CD8-positive, alpha-beta memory T cell (primary cell): ENCODE measurements at regions of chr5 and their contacts with region 1.

Region 1: GRCh38 chr5:142922223-142922952 is 152.2 kb downstream of the ARHGAP26 start:
- DNase-seq: peak in 1 of 5 donors; percentile 5
- H3K4me3 ChIP-seq: no peak overlapping the region
- H3K4me3 Mint-ChIP-seq: no peak overlapping the region
- H3K27ac ChIP-seq: no peak overlapping the region
- H3K27ac Mint-ChIP-seq: peak overlapping the region; percentile 59 to 93 (median 82)
- H3K4me1 ChIP-seq: peaks cover 13% of the 10 kb centered on the region
- H3K4me1 Mint-ChIP-seq: peaks cover 41 to 54% (median 53%) of the 10 kb centered on the region in 3 donors
- H3K27me3 ChIP-seq: no peaks in the 10 kb centered on the region
- H3K27me3 Mint-ChIP-seq: peaks cover 0 to 1% of the 10 kb centered on the region in 2 donors

Region 2: DNA sequence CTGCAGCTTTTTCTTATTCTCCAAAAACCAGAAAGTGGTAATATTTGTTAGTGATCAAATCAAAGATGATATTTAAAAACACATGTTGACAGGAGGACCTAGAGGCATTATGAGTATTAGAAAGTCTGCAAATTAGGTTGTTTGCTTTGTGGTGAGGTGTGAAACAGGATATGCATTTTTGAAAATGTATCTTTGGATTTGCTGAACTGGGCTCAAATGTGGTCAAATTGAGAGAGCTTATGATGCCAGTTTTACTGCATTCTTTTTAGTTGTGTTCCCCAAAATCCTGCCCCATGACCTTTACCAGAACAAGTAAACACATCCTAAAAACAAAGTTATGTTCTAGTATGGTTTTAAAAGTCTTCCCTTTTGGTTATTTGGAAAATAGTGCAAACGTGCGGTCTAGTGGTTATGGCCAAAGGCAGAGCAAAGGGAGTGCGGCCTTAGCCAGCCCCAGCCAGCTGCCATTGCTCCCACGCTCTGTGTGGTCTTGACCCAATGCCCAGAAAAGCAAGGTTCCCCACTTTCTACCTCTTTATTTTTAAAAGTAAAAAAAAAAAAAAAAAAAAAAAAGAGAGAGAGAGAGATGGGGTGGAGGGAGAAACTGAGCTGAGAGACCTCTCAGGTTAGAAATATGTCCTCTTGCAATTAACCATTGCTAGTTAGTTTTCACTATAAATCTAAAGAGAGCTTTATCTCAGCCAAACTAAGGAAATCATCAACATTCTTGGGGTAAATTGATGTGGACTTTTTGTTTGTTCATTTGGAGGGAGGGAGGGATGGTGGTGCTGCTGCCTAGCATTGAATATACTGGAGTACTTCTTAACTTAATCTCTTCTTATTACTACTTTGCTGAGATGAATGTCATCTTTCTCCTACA is 24.4 kb after region 1 on chr5:
- CTCF ChIA-PET with region 1: no interaction called
- POLR2A ChIA-PET with region 1: no interaction called
- DNase-seq: no peak
- H3K4me3 ChIP-seq: no peak overlapping the region
- H3K4me3 Mint-ChIP-seq: peak overlapping the region in 3 of 7 donors; percentile 23 to 28 (median 25)
- H3K27ac ChIP-seq: no peak overlapping the region
- H3K27ac Mint-ChIP-seq: peak overlapping the region in 7 of 8 donors; percentile 32 to 80 (median 60)
- H3K4me1 ChIP-seq: peaks cover 9% of the 10 kb centered on the region
- H3K4me1 Mint-ChIP-seq: peaks cover 62 to 80% (median 77%) of the 10 kb centered on the region in 3 donors
- H3K27me3 ChIP-seq: no peaks in the 10 kb centered on the region
- H3K27me3 Mint-ChIP-seq: no peaks in the 10 kb centered on the region

Region 3: GRCh38 chr5:142966121-142966420 is 43.7 kb after region 1 on chr5:
- CTCF ChIA-PET with region 1: no interaction called
- POLR2A ChIA-PET with region 1: no interaction called
- DNase-seq: no peak
- H3K4me3 ChIP-seq: no peak overlapping the region
- H3K4me3 Mint-ChIP-seq: no peak overlapping the region
- H3K27ac ChIP-seq: no peak overlapping the region
- H3K27ac Mint-ChIP-seq: peak overlapping the region in 4 of 8 donors; percentile 10 to 83 (median 48)
- H3K4me1 ChIP-seq: peaks cover 11% of the 10 kb centered on the region
- H3K4me1 Mint-ChIP-seq: peaks cover 53 to 67% (median 55%) of the 10 kb centered on the region in 3 donors
- H3K27me3 ChIP-seq: no peaks in the 10 kb centered on the region
- H3K27me3 Mint-ChIP-seq: no peaks in the 10 kb centered on the region

Region 4: DNA sequence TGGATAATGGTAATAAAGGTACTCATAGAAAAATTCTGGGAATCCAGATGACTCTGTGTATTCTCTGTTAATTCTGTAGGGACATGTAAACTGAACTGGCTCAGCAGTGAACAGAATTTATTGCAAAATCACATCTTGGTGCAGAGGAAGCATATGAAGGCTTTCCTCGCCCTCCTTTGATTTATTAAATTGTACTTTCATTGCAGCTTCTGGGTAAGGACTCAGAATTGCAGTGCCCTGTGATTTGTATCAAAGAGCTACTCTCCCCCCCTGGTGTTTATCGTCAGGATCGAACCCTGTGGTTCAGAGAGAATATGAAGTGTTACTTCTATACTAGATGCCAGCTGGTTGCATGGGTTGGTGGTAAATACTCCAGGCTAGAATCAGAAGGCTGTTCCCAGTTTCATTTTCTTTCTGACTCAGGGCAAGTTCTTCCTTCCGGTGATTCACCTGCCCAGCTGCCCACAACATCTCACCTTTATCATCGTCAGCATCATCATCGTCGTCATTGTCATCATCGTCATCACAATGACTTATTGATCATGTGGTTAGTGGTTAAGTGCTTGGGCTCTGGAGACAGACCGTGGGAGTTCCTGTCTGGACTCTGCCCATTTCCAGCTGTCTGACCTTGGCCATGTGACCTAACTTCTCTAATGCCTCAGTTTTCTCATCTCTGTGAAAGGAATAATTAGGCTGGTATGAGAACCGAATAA is 86.6 kb after region 1 on chr5:
- CTCF ChIA-PET with region 1: interaction called, 19 read pairs
- POLR2A ChIA-PET with region 1: no interaction called
- DNase-seq: peak; percentile 57 to 94 (median 78)
- H3K4me3 ChIP-seq: no peak overlapping the region
- H3K4me3 Mint-ChIP-seq: peak overlapping the region; percentile 0 to 69 (median 57)
- H3K27ac ChIP-seq: peak overlapping the region; percentile 64
- H3K27ac Mint-ChIP-seq: peak overlapping the region; percentile 95 to 99 (median 96)
- H3K4me1 ChIP-seq: peaks cover 46% of the 10 kb centered on the region
- H3K4me1 Mint-ChIP-seq: peaks cover 58 to 73% (median 62%) of the 10 kb centered on the region in 3 donors
- H3K27me3 ChIP-seq: no peaks in the 10 kb centered on the region
- H3K27me3 Mint-ChIP-seq: peaks cover 0 to 3% of the 10 kb centered on the region in 2 donors

Region 5: DNA sequence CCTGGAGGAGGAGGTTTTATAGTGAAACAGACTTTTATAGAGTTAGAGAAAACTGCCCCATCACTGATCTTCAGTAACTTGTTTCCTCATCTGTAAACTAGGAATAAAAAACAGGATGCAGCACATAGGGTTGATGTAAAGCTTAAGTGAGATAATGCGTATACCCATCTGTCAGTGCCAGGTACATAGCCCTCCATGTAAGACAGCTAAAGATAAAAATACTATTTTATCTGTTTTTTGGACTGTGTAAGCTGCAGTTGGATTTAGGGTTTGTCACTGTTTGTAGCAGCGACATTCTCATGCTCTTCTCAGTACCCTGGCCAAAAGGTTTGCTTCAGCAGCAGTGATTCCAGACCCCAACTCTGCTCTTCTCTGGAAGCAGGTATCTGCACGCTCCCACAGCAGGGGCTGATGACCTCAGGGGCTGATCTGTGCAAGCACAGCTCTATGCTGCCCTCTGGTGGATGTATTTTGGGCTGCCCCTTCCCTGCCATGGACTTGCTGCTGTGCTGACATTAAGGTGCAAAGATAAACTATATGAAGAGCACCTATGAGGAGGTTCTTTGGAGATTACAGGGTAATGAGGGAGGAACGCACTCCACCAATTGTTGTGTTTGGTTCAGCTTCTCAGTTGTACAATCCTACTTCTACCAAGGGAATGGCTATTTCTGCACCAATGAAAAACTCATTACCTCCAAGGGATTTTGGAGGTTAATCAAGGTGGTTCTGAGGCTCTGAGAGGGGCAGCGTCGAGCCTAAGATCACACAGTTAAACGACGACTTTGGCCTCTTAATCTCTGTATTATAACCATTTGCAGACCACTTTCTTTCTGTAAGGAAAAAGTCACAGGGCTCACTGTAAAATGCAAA is 902.7 kb after region 1 on chr5:
- CTCF ChIA-PET with region 1: interaction called, 25 read pairs
- POLR2A ChIA-PET with region 1: no interaction called
- DNase-seq: peak; percentile 64 to 87 (median 67)
- H3K4me3 ChIP-seq: no peak overlapping the region
- H3K4me3 Mint-ChIP-seq: no peak overlapping the region
- H3K27ac ChIP-seq: no peak overlapping the region
- H3K27ac Mint-ChIP-seq: no peak overlapping the region
- H3K4me1 ChIP-seq: peaks cover 13% of the 10 kb centered on the region
- H3K4me1 Mint-ChIP-seq: peaks cover 8 to 19% (median 10%) of the 10 kb centered on the region in 3 donors
- H3K27me3 ChIP-seq: no peaks in the 10 kb centered on the region
- H3K27me3 Mint-ChIP-seq: no peaks in the 10 kb centered on the region